ENCODE measurements at regions of chr16 and their contacts with region 1.

Region 1: GRCh38 chr16:71412270-71413160 is 29.3 kb downstream of the TLE7 start:
- DNase-seq: peak; percentile 78
- H3K4me3 ChIP-seq: peak overlapping the region in 1 of 2 experiments; percentile 12; a peak in 2 of 4 replicates
- H3K27ac ChIP-seq: no peak overlapping the region
- H3K4me1 ChIP-seq: no peaks in the 10 kb centered on the region; a peak in 1 of 4 replicates
- H3K27me3 ChIP-seq: peaks cover 20% of the 10 kb centered on the region; the same call in 1 of the 2 replicates
- CTCF ChIP-seq: peak; percentile 81
- EP300 ChIP-seq: no peak
- RAD21 ChIP-seq: peak; percentile 77

Region 2: GRCh38 chr16:71351558-71351901 is 61.0 kb before region 1 on chr16:
- CTCF ChIA-PET with region 1: interaction called, 17 read pairs
- POLR2A ChIA-PET with region 1: no interaction called
- DNase-seq: no peak
- H3K4me3 ChIP-seq: no peak overlapping the region
- H3K27ac ChIP-seq: no peak overlapping the region
- H3K4me1 ChIP-seq: no peaks in the 10 kb centered on the region
- H3K27me3 ChIP-seq: peaks cover 16% of the 10 kb centered on the region; the same call in 1 of the 2 replicates
- CTCF ChIP-seq: no peak
- EP300 ChIP-seq: no peak
- RAD21 ChIP-seq: no peak

Region 3: GRCh38 chr16:71396594-71396993 is 15.9 kb before region 1 on chr16:
- CTCF ChIA-PET with region 1: interaction called, 16 read pairs
- POLR2A ChIA-PET with region 1: no interaction called
- DNase-seq: no peak
- H3K4me3 ChIP-seq: no peak overlapping the region
- H3K27ac ChIP-seq: no peak overlapping the region
- H3K4me1 ChIP-seq: no peaks in the 10 kb centered on the region
- H3K27me3 ChIP-seq: peaks cover 18% of the 10 kb centered on the region
- CTCF ChIP-seq: no peak
- EP300 ChIP-seq: no peak
- RAD21 ChIP-seq: no peak

Region 4: DNA sequence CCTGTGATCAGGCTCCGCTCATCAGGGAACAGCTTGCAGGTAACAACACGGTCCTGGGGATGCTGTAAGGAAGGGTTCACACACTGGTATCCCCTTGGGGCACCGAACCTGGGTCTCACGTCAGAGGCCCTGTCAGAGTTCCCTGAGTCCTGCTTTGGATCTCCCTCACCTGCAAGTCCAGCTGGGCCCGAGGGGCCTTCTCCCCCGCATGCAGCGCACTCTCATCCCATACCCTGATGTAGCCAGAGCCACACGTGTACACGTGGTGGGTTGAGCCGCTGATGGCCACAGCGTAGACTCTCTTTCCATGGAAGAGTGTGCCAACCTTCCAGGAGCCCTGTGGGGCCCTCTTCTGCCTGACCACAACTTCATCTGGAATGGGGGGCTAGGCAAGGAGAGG is 19.4 kb after region 1 on chr16:
- CTCF ChIA-PET with region 1: interaction called, 25 read pairs
- POLR2A ChIA-PET with region 1: no interaction called
- DNase-seq: no peak
- H3K4me3 ChIP-seq: no peak overlapping the region
- H3K27ac ChIP-seq: no peak overlapping the region
- H3K4me1 ChIP-seq: no peaks in the 10 kb centered on the region
- H3K27me3 ChIP-seq: no peaks in the 10 kb centered on the region; the same call in 1 of the 2 replicates
- CTCF ChIP-seq: no peak
- EP300 ChIP-seq: no peak
- RAD21 ChIP-seq: no peak

Region 5: DNA sequence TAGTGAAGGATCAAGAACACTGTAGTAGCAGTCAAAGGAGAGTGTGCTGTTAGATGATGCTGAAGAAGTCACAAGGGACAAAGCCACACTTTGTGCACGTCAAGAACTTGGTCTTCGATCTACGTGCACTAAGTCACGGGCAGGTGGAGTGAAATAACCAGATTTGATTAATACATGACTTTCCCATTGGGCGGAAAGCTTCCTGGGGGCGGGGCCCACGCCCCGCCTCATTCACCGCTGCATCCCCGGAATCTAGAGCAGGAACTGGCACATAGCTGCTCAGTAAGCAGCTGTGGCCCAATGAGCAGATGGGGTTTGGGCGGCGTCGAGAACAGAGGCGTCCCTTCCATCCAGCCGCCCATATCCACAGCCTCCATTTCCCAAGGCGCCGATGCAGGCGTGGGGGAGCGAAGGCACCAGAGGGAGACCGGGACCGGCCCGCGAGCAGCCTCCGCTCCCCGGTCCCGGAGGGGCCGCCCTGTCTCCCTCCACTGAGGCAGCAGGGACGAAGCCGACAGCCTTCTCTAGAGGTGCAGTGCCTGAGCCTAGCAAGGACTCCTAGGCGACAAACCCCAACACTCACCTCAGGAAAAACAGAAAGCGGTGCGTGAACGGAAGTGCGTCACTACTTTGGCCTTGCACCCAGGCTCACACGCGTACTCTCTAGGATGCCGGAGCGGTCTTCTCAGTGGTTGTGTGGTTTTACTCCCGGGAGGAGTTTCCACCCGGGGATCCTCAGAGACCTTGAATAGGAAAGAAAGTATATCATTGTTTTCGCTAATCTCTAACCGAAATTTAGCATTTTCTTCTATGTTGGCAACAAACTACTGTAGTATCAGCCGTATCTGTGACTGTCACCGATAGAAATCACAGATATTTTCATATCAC is 71.7 kb after region 1 on chr16:
- CTCF ChIA-PET with region 1: interaction called, 45 read pairs
- POLR2A ChIA-PET with region 1: no interaction called
- DNase-seq: peak; percentile 89
- H3K4me3 ChIP-seq: peak overlapping the region; percentile 89 to 90
- H3K27ac ChIP-seq: peak overlapping the region; percentile 93 to 97
- H3K4me1 ChIP-seq: peaks cover 0 to 8% of the 10 kb centered on the region in 2 experiments; a peak in 2 of 4 replicates
- H3K27me3 ChIP-seq: no peaks in the 10 kb centered on the region
- CTCF ChIP-seq: no peak
- EP300 ChIP-seq: no peak
- RAD21 ChIP-seq: no peak

Region 6: DNA sequence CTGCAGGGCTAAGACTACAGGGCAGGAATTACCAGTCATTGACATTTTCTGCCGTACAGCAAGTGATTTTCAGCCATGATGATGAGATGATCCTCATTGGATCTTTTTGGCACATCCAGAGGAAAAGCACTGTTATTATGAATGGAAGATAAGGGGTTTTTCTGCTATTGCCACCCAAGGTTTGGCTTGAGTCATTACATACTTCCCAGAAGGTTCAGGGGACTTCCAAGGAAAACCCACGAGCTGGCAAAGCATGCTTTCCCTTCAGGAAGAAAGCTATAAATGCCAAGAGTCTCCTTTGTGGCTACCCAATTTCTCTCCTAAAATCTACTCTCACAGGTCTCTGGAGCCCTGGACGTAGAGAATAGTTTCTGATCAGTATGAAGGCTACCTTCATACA is 119.9 kb after region 1 on chr16:
- CTCF ChIA-PET with region 1: interaction called, 13 read pairs
- POLR2A ChIA-PET with region 1: no interaction called
- DNase-seq: no peak
- H3K4me3 ChIP-seq: no peak overlapping the region
- H3K27ac ChIP-seq: no peak overlapping the region
- H3K4me1 ChIP-seq: no peaks in the 10 kb centered on the region
- H3K27me3 ChIP-seq: no peaks in the 10 kb centered on the region
- CTCF ChIP-seq: no peak
- EP300 ChIP-seq: no peak
- RAD21 ChIP-seq: no peak

Measured in SK-N-SH (cell line).